ENCODE measurements at regions of chr22 and their contacts with region 1.

Region 1: DNA sequence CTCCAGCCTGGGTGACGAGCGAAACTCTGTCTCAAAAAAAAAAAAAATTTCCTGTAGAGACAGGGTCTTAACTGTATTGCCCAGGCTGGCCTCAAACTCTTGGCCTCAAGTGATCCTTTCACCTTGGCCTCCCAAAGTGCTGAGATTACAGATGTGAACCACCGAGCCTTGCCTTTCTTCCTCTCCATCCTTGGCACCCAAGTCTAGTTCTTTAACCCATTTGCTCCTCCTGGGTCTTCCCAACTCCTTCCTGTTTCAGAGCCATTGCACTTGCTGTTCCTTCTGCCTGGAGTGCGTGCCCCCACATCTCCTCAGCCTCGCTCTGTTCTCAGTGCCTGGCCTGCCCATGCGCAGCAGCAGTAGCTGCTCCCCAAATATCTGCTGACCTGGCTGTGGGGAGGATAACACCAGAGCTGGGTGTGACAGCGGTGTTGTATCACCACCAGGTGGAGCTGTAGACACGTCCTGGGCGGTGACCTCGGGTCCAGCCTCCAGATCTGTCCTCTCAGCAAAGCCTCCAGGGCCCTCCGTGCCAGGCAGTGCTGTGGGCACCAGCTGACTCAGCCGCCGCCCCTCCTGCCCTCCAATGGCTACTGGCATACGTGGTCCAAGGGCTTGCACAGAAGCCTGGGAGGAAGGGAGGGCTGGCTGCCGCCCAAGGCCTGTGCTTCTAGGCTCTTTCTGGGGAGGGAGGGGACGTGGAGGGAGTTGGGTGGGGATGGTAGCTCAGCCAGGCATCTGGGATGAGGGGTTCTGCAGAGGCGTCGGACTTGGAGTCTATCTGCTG is 22.0 kb downstream of the TEF start:
- DNase-seq: peak; percentile 69
- ATAC-seq: peak; percentile 87
- H3K4me3 Mint-ChIP-seq: no peak overlapping the region
- H3K27ac Mint-ChIP-seq: peak overlapping the region; percentile 20
- H3K4me1 Mint-ChIP-seq: peaks cover 37% of the 10 kb centered on the region
- H3K27me3 Mint-ChIP-seq: no peaks in the 10 kb centered on the region
- CTCF ChIP-seq: peak; percentile 33

Region 2: DNA sequence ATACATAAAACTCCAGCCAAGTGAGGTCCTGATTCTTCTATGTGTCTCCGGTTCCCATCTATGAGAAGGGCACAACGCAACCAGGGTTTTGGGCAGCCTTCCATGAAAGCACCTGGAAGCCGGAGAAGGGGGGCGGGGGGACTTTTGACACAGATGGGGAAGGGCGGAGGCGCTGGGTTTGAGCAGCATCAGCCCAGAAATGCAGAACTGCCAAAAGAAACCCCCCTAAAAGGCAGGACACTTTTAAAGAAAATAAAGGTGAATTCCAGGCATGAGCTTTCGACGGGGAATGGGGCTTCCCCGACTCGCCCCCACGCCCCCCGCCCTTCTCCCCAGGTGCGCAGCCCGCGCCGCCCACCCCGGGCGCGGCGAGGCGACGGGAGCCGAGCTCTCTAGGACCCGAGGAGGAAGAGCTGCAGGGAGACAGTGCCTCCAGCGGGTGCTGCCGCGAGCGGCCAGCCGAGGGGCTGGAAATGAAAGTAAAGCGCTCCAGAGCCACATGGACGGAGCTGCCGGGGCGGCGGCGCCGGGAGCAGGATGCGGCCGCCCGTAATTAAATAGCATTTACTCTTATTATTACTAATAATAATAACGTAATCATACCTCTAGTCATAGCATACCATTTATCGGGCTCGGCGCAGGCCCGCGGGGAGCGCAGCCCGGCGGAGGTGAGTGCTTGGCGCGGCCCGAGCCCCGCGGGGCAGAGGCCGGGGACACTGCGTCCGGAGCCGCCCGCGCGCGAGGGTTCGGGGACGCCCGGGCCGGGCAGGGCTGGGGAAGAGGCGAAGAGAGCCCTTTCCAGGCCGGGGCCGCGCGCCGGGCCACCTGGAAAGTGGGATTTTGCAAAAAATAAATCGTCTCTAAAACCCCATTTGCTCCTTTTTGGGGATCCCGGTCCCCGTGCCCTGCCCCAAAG is 102.4 kb before region 1 on chr22 and contains the start of gene ZC3H7B:
- CTCF ChIA-PET with region 1: no interaction called
- POLR2A ChIA-PET with region 1: no interaction called
- intact Hi-C with region 1: no loop called
- DNase-seq: peak; percentile 74
- ATAC-seq: peak; percentile 93
- H3K4me3 Mint-ChIP-seq: peak within 1 kb of the TSS; percentile 83
- H3K27ac Mint-ChIP-seq: peak within 1 kb of the TSS; percentile 92
- H3K4me1 Mint-ChIP-seq: peaks cover 30% of the 10 kb centered on the region
- H3K27me3 Mint-ChIP-seq: no peaks in the 10 kb centered on the region
- CTCF ChIP-seq: no peak
- total RNA-seq, gene ZC3H7B: 54.0 and 58.2 TPM in 2 replicates

Region 3: GRCh38 chr22:41311487-41311886 is 92.2 kb before region 1 on chr22:
- CTCF ChIA-PET with region 1: no interaction called
- POLR2A ChIA-PET with region 1: no interaction called
- intact Hi-C with region 1: no loop called
- DNase-seq: no peak
- ATAC-seq: no peak
- H3K4me3 Mint-ChIP-seq: no peak overlapping the region
- H3K27ac Mint-ChIP-seq: no peak overlapping the region
- H3K4me1 Mint-ChIP-seq: peaks cover 14% of the 10 kb centered on the region
- H3K27me3 Mint-ChIP-seq: no peaks in the 10 kb centered on the region
- CTCF ChIP-seq: no peak

Region 4: GRCh38 chr22:41367039-41367679 is 36.6 kb before region 1 on chr22:
- CTCF ChIA-PET with region 1: no interaction called
- POLR2A ChIA-PET with region 1: no interaction called
- intact Hi-C with region 1: no loop called
- DNase-seq: no peak
- ATAC-seq: no peak
- H3K4me3 Mint-ChIP-seq: no peak overlapping the region
- H3K27ac Mint-ChIP-seq: no peak overlapping the region
- H3K4me1 Mint-ChIP-seq: no peaks in the 10 kb centered on the region
- H3K27me3 Mint-ChIP-seq: peaks cover 8% of the 10 kb centered on the region
- CTCF ChIP-seq: no peak

Region 5: GRCh38 chr22:41479671-41480396 is 76.1 kb after region 1 on chr22:
- CTCF ChIA-PET with region 1: interaction called, 9 read pairs
- POLR2A ChIA-PET with region 1: interaction called, 13 read pairs
- intact Hi-C with region 1: no loop called
- DNase-seq: no peak
- ATAC-seq: no peak
- H3K4me3 Mint-ChIP-seq: peak overlapping the region; percentile 79
- H3K27ac Mint-ChIP-seq: peak overlapping the region; percentile 96
- H3K4me1 Mint-ChIP-seq: peaks cover 87% of the 10 kb centered on the region
- H3K27me3 Mint-ChIP-seq: no peaks in the 10 kb centered on the region
- CTCF ChIP-seq: no peak

Region 6: GRCh38 chr22:41501209-41501608 is 97.5 kb after region 1 on chr22:
- CTCF ChIA-PET with region 1: interaction called, 91 read pairs
- POLR2A ChIA-PET with region 1: interaction called, 13 read pairs
- intact Hi-C with region 1: loop called (anchors 1 kb)
- DNase-seq: no peak
- ATAC-seq: peak; percentile 88
- H3K4me3 Mint-ChIP-seq: no peak overlapping the region
- H3K27ac Mint-ChIP-seq: peak overlapping the region; percentile 83
- H3K4me1 Mint-ChIP-seq: peaks cover 47% of the 10 kb centered on the region
- H3K27me3 Mint-ChIP-seq: no peaks in the 10 kb centered on the region
- CTCF ChIP-seq: no peak

Region 7: DNA sequence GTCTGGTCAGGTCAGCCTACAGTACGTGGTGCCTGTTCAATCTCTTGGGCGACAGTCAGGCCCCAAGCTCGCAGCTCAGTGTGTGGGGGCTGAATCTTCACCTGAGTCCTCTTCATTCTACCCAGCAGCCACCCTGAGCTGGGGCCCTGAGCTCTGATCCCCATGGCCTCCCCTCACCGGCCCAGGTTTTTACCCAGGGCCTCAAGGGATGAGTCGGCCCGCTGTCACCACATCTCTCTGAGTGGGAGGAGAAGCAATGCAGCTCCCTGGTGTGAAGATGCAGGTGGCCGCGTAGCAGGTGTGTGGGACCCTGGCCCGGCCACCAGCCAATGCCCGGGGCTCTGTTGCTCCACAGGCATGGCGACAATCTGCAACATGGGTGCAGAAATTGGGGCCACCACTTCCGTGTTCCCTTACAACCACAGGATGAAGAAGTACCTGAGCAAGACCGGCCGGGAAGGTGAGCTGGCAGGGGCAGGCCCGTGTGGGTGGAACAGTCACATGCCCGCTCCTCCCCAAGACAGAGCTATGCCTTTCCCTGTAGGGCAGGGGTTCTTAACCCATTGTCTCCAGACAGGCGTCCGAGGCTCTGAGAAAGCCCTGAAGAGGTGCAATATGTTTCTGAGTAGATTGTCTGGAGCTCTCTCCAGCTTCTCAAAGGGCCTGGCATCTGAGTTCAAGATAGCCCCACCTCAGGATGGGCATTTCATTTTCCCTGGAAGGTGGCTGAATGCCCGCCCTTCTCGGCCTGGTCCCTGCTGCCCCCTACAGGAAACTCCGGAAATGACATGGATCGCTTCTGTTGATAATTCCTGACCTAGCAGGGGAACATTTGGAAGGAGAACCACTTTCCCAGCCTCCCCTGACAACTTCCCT is 113.7 kb after region 1 on chr22:
- CTCF ChIA-PET with region 1: interaction called, 99 read pairs
- POLR2A ChIA-PET with region 1: interaction called, 18 read pairs
- intact Hi-C with region 1: loop called (anchors 1 kb)
- DNase-seq: peak; percentile 41
- ATAC-seq: peak; percentile 60
- H3K4me3 Mint-ChIP-seq: no peak overlapping the region
- H3K27ac Mint-ChIP-seq: no peak overlapping the region
- H3K4me1 Mint-ChIP-seq: no peaks in the 10 kb centered on the region
- H3K27me3 Mint-ChIP-seq: no peaks in the 10 kb centered on the region
- CTCF ChIP-seq: no peak

Region 8: GRCh38 chr22:41526837-41527799 is 123.4 kb after region 1 on chr22:
- CTCF ChIA-PET with region 1: interaction called, 111 read pairs
- POLR2A ChIA-PET with region 1: interaction called, 8 read pairs
- intact Hi-C with region 1: loop called (anchors 1 kb)
- DNase-seq: peak; percentile 67
- ATAC-seq: peak; percentile 73
- H3K4me3 Mint-ChIP-seq: no peak overlapping the region
- H3K27ac Mint-ChIP-seq: peak overlapping the region; percentile 25
- H3K4me1 Mint-ChIP-seq: peaks cover 19% of the 10 kb centered on the region
- H3K27me3 Mint-ChIP-seq: no peaks in the 10 kb centered on the region
- CTCF ChIP-seq: no peak

Region 9: DNA sequence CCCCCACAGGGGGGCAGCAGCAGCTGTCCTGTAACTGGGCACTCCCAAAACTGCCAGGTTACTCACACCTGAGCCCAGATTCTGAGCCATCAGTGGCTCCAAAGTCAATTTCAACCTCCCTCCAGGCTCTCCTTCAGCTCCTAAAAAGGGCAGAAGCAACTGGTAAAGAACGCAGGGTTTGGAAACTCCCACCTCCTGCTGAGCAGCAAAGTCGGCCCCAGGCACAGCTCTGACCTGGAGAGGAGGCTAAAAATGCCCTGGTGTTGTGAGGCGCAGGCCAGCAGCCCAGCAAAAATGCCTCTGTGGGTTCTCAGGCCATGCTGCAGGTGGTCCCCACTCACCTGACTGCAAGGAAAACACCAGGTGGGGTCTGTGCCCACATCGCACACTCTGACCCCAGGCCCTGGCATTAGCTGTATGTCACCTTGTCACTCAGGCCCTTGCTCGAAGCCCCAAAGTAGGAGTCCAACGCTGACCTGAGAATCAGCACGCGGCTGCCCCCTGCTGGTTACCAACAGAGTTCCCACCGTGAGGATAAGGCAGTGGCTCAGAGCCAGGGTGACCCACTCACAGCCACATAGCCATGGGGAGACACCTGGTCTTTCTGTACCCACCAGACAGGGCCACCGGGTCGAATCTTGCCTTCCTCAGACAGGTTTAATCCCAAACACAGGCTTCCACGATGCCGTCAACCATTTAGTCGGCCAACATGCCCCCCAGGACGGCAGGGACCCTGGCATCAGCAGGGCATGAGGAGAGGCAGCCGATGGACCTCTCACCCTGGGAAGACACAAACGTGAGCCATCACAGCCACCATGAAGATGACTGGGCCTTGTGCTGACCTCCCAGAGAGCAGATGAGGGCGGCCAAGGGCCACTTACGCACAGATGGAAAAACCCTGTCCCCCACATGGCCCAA is 129.4 kb after region 1 on chr22:
- CTCF ChIA-PET with region 1: interaction called, 111 read pairs
- POLR2A ChIA-PET with region 1: interaction called, 9 read pairs
- intact Hi-C with region 1: loop called (anchors 1 kb)
- DNase-seq: peak; percentile 64
- ATAC-seq: peak; percentile 86
- H3K4me3 Mint-ChIP-seq: no peak overlapping the region
- H3K27ac Mint-ChIP-seq: no peak overlapping the region
- H3K4me1 Mint-ChIP-seq: no peaks in the 10 kb centered on the region
- H3K27me3 Mint-ChIP-seq: no peaks in the 10 kb centered on the region
- CTCF ChIP-seq: peak; percentile 23

Region 10: DNA sequence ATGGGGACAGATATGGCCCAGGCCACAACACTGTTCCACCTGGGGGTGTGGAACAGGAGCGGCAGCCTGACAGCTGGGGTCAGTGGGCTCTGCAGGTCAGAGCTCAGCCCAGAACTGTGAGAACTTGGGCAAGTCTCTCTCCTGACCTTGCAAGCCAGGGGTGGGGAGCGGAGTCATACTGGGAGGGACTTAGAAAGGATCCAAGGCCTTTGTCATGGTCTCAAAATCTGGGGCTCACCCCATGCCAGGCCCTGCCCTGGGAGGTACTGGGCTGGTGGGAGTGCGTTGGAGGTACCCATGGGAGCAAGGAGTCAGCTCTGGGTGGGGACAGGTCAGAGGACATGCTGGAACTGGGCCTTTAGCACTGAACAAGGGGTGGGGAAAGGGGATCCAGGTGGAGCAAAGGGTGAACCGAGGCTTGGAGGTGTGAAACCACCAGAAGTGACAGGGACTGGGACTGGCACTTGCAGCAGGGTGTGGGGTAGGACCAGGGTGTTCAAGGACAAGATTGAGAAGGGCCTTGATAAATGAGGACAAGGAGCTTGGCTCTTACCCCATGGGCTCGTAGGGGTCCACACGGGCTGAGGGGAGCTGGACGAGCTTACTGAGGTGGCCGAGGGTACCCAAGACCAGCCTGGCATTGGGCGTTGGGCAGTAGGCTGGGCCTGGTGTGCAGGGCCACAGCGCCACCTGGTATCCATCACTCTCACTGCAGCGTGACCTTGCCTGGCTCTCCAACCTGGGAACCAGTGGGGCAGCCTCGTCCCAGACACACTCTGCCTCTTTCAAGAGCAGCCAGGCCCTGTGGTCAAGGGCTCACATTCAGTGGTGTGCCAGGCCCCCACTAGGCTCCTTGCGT is 193.3 kb after region 1 on chr22:
- CTCF ChIA-PET with region 1: interaction called, 7 read pairs
- POLR2A ChIA-PET with region 1: no interaction called
- intact Hi-C with region 1: loop called (anchors 5 kb)
- DNase-seq: no peak
- ATAC-seq: peak; percentile 67
- H3K4me3 Mint-ChIP-seq: no peak overlapping the region
- H3K27ac Mint-ChIP-seq: no peak overlapping the region
- H3K4me1 Mint-ChIP-seq: no peaks in the 10 kb centered on the region
- H3K27me3 Mint-ChIP-seq: no peaks in the 10 kb centered on the region
- CTCF ChIP-seq: no peak